ENCODE measurements at regions of chr11 and their contacts with region 1.

Region 1: GRCh38 chr11:8263769-8264410 is at the start of gene LMO1:
- DNase-seq: peak in 1 of 2 experiments; percentile 94
- H3K4me3 ChIP-seq: peak within 1 kb of the TSS; percentile 44 to 65 (median 58)
- H3K27ac ChIP-seq: no peak within 1 kb of the TSS
- H3K4me1 ChIP-seq: peaks cover 0 to 10% (median 8%) of the 10 kb centered on the region in 4 experiments; a peak in 6 of 7 replicates
- H3K27me3 ChIP-seq: peaks cover 50 to 85% (median 78%) of the 10 kb centered on the region in 4 experiments
- CTCF ChIP-seq: peak; percentile 86 to 93 (median 86)
- EP300 ChIP-seq: no peak
- POLR2A ChIP-seq: no peak
- RAD21 ChIP-seq: peak; percentile 74 to 82
- total RNA-seq, gene LMO1: not detected in 2 replicates

Region 2: GRCh38 chr11:8225589-8226036 is 38.3 kb before region 1 on chr11:
- CTCF ChIA-PET with region 1: interaction called, 171 read pairs
- POLR2A ChIA-PET with region 1: interaction called, 3 read pairs
- DNase-seq: peak; percentile 86 to 98
- H3K4me3 ChIP-seq: no peak overlapping the region
- H3K27ac ChIP-seq: no peak overlapping the region
- H3K4me1 ChIP-seq: peaks cover 0 to 14% (median 3%) of the 10 kb centered on the region in 4 experiments; a peak in 4 of 7 replicates
- H3K27me3 ChIP-seq: no peaks in the 10 kb centered on the region; a peak in 1 of 7 replicates
- CTCF ChIP-seq: peak; percentile 90 to 98 (median 97)
- EP300 ChIP-seq: no peak
- POLR2A ChIP-seq: no peak
- RAD21 ChIP-seq: peak; percentile 98 to 99

Region 3: GRCh38 chr11:8247312-8247711 is 16.6 kb before region 1 on chr11:
- CTCF ChIA-PET with region 1: interaction called, 78 read pairs
- POLR2A ChIA-PET with region 1: interaction called, 5 read pairs
- DNase-seq: peak in 1 of 2 experiments; percentile 75
- H3K4me3 ChIP-seq: no peak overlapping the region
- H3K27ac ChIP-seq: no peak overlapping the region
- H3K4me1 ChIP-seq: peaks cover 7 to 16% (median 11%) of the 10 kb centered on the region in 4 experiments; a peak in 6 of 7 replicates
- H3K27me3 ChIP-seq: peaks cover 0 to 1% (median 0%) of the 10 kb centered on the region in 4 experiments; a peak in 1 of 7 replicates
- CTCF ChIP-seq: peak; percentile 65 to 77 (median 71)
- EP300 ChIP-seq: no peak
- POLR2A ChIP-seq: no peak
- RAD21 ChIP-seq: peak; percentile 64 to 68

Region 4: DNA sequence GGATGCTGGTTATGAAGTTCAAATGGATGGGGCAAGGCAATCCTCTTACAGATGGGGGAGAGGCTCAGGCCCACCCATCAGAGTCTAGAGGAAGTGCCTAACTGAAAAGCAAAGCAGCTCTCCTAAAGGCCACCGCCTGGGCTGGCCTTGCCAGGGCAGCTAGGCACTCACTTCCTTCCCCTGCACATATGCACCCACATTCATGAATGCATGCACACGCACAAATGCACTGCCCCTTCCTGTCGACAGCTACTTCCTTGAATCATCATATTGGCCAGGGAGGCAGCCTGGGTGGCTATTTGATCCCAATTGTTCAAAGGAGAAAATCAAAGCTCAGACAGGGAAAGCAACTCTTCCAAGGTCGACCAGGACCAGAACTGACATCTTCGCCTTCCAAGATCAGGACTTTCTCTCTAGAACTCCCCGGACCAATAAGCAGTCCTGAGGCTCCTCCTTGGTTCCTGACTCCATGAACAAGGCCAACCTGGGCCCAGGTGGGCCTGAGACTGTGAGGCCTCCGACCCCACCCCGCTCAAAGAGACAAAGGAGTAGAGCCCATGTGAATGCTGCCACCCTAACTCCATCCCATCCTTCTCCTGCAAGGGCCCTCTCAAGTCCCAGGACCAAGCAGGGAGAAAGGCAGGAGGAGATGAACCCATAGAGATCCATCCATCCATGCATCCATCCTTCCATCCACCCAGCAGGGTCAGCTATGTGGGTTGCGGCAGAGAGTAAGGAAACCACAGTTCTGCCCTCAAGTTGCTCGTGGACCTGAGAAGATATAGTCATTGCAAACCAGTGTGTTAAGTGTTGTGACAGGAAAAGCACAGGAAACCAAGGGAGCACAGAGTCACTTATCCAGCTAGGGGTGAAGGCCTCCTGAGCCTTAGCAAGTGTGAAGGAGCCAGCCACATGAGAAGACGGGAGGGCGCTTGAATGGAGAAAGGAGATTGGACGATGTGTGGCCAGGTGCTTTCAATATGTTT is 35.2 kb after region 1 on chr11:
- CTCF ChIA-PET with region 1: interaction called, 29 read pairs
- POLR2A ChIA-PET with region 1: no interaction called
- DNase-seq: no peak
- H3K4me3 ChIP-seq: no peak overlapping the region
- H3K27ac ChIP-seq: no peak overlapping the region
- H3K4me1 ChIP-seq: no peaks in the 10 kb centered on the region
- H3K27me3 ChIP-seq: no peaks in the 10 kb centered on the region; a peak in 1 of 7 replicates
- CTCF ChIP-seq: no peak
- EP300 ChIP-seq: no peak
- POLR2A ChIP-seq: no peak
- RAD21 ChIP-seq: no peak

Region 5: GRCh38 chr11:8328848-8329330 is 65.0 kb after region 1 on chr11:
- CTCF ChIA-PET with region 1: interaction called, 29 read pairs
- POLR2A ChIA-PET with region 1: no interaction called
- DNase-seq: peak; percentile 72 to 95
- H3K4me3 ChIP-seq: peak overlapping the region in 1 of 4 experiments; percentile 36; a peak in 1 of 8 replicates
- H3K27ac ChIP-seq: no peak overlapping the region
- H3K4me1 ChIP-seq: peaks cover 5 to 25% (median 12%) of the 10 kb centered on the region in 4 experiments
- H3K27me3 ChIP-seq: no peaks in the 10 kb centered on the region; a peak in 1 of 7 replicates
- CTCF ChIP-seq: peak; percentile 80 to 92 (median 90)
- EP300 ChIP-seq: peak in 1 of 2 experiments; percentile 51; a peak in 1 of 3 replicates
- POLR2A ChIP-seq: no peak
- RAD21 ChIP-seq: peak; percentile 55 to 68

Region 6: GRCh38 chr11:8566613-8567210 is 302.8 kb after region 1 on chr11:
- CTCF ChIA-PET with region 1: interaction called, 25 read pairs
- POLR2A ChIA-PET with region 1: no interaction called
- DNase-seq: no peak
- H3K4me3 ChIP-seq: no peak overlapping the region
- H3K27ac ChIP-seq: no peak overlapping the region
- H3K4me1 ChIP-seq: no peaks in the 10 kb centered on the region
- H3K27me3 ChIP-seq: no peaks in the 10 kb centered on the region
- CTCF ChIP-seq: peak in 2 of 3 experiments; percentile 38 to 39; a peak in 2 of 4 replicates
- EP300 ChIP-seq: no peak
- POLR2A ChIP-seq: no peak
- RAD21 ChIP-seq: peak; percentile 63 to 76